MCF 10A (cell line): ENCODE measurements at regions of chr5 and their contacts with region 1.

Region 1: DNA sequence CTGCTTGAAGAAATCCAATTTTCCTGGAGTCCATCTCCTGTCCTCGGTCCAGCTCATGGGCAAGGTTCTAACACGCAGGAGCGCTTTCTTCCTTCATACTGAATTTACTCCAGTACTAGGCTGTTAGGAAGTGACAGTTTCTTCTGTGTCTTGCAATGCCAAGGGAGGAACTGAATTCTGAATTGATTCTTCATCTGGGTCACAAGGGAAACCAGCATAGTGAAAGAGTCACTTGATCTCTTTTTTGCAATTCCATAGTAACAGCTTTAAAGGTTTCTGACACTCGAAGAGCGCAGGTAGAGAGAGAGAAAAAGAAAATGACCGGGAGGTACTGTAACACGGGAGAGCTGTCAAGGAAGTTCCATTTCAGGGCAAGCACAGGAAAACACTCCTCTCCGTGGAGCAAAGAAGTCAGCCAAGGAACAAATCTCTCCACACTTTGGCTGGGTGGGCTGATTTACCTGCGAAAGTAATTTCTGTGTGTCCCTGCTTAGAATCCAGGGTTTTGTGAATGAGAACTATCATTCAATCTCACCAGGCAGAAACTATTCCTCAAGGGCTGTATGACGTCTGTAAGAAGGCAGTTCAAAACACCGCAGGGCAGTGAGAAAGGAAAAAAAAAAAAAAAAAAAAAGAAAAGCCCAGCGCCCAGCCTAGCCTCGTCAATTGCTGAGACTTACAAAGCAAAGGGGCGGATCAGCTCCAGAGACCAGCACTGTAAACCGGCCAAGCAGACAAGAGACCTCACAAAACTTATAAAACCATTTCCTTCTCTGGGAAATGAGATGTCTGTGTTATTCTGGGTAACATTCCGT is 617.8 kb downstream of the PDE4D start:
- DNase-seq: peak; percentile 61
- H3K4me3 Mint-ChIP-seq: peak overlapping the region; percentile 89
- H3K27ac Mint-ChIP-seq: peak overlapping the region; percentile 97
- H3K4me1 Mint-ChIP-seq: peaks cover 18% of the 10 kb centered on the region
- H3K27me3 Mint-ChIP-seq: no peaks in the 10 kb centered on the region
- CTCF ChIP-seq: no peak

Region 2: GRCh38 chr5:59296317-59297264 is 20.9 kb after region 1 on chr5:
- CTCF ChIA-PET with region 1: interaction called, 4 read pairs
- POLR2A ChIA-PET with region 1: interaction called, 36 read pairs
- intact Hi-C with region 1: no loop called
- DNase-seq: peak; percentile 48
- H3K4me3 Mint-ChIP-seq: peak overlapping the region; percentile 71
- H3K27ac Mint-ChIP-seq: peak overlapping the region; percentile 84
- H3K4me1 Mint-ChIP-seq: peaks cover 35% of the 10 kb centered on the region
- H3K27me3 Mint-ChIP-seq: no peaks in the 10 kb centered on the region
- CTCF ChIP-seq: no peak